Heart left ventricle (tissue), 16 donors: ENCODE measurements at regions of chr7 and their contacts with region 1.

Region 1: DNA sequence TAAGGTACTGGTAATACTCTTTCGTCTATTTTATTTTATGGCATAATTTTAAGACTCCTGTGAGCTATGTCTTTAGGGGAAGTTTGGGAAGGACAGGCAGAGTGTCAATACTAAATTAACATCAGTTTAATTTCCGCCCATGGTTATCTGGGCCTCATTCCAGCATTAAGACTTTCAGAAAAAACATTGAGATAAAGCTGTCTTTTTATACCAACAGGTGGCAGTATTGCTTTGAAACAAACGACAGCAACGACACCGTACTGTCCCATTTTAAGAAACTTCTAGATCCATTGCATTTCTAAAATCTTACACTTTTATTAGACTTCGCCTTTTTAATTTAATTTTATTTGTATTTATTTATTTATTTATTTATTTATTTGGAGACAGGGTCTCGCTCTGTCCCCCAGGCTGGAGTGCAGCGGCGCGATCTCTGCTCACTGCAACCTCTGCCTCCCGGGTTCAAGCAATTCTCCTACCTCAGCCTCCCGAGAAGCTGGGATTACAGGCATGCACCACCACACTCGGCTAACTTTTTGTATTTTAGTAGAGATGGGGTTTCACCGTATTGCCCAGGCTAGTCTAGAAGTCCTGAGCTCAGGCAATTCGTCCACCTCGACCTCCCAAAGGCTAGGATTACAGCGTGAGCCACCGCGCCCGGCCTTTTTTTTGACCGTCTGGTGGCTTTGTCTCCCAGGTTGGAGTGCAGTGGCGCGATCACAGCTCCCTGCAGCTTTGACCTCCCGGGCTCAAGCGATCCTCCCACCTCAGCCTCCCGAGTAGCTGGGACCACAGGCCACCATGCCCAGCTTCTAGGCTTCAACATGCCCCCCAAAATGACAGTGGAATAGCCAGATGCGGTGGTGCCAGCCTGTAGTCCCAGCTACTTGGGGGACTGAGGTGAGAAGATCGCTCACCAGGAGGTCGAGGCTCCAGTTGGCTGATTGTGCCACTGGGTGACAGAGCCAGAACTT is 78.7 kb upstream of the C1GALT1 start:
- DNase-seq: no peak
- ATAC-seq: peak in 3 of 4 donors; percentile 53 to 66 (median 60)
- H3K4me3 ChIP-seq: peak overlapping the region in 2 of 12 donors; percentile 19 to 40
- H3K27ac ChIP-seq: peak overlapping the region in 1 of 12 donors; percentile 10
- H3K4me1 ChIP-seq: peaks cover 0 to 22% (median 14%) of the 10 kb centered on the region in 12 donors
- H3K27me3 ChIP-seq: no peaks in the 10 kb centered on the region
- CTCF ChIP-seq: peak; percentile 59 to 77 (median 70)
- POLR2A ChIP-seq: no peak

Region 2: GRCh38 chr7:7182156-7183060 is 78.8 kb after region 1 on chr7 and contains the start of gene C1GALT1:
- intact Hi-C with region 1: loop called in 5 of 10 experiments (anchors 5 to 10 kb)
- DNase-seq: peak; percentile 98 to 99 (median 98)
- ATAC-seq: peak; percentile 98 to 99 (median 98)
- H3K4me3 ChIP-seq: peak within 1 kb of the TSS; percentile 62 to 97 (median 92)
- H3K27ac ChIP-seq: peak within 1 kb of the TSS; percentile 87 to 99 (median 96)
- H3K4me1 ChIP-seq: peaks cover 0 to 39% (median 25%) of the 10 kb centered on the region in 12 donors
- H3K27me3 ChIP-seq: no peaks in the 10 kb centered on the region
- CTCF ChIP-seq: peak in 11 of 12 donors; percentile 13 to 57 (median 39)
- POLR2A ChIP-seq: peak in 1 of 2 donors; percentile 96
- total RNA-seq, gene C1GALT1: 16.5 to 36.4 (median 21.3) TPM

Region 3: DNA sequence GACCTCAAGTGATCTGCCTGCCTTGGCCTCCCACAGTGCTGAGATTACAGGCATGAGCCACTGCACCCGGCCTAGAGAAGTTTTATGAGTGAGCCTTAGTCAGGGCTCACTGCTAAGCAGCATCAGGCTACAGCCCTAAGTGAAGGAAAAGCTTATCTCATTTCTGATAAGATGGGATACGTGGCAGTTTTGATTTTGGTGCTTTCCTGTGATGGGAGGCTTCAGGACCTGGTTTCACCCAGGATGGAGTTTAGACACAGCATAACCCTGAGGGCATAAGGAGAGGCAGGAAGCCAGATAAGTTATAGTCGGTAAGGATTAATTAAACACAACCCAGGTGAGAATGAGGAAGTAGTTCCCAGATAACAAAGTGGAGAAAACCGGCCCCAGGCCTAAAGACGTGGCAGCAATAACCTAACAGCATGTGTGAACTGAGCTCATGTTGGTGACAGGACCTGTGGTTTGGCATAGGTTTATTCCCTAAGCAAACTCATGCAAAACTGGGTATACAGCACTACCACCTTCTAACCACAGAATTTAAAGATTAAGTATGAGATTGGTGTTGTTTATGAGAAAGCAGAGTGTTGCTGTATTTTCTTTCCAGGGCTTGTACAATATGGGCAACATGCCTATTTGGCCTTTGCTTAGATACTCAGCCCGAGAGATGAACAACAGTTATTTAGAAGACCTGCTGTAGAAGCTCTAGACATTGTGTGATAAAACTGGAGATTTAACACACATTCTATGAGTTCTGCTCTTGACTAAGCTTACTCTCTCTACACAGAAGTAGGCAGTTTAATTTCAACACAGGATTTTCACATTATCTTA is 312.6 kb after region 1 on chr7:
- intact Hi-C with region 1: loop called in 7 of 10 experiments (anchors 5 to 10 kb)
- DNase-seq: no peak
- ATAC-seq: peak in 1 of 4 donors; percentile 28
- H3K4me3 ChIP-seq: no peak overlapping the region
- H3K27ac ChIP-seq: no peak overlapping the region
- H3K4me1 ChIP-seq: peaks cover 0 to 7% (median 0%) of the 10 kb centered on the region in 12 donors
- H3K27me3 ChIP-seq: no peaks in the 10 kb centered on the region
- CTCF ChIP-seq: no peak
- POLR2A ChIP-seq: no peak

Region 4: DNA sequence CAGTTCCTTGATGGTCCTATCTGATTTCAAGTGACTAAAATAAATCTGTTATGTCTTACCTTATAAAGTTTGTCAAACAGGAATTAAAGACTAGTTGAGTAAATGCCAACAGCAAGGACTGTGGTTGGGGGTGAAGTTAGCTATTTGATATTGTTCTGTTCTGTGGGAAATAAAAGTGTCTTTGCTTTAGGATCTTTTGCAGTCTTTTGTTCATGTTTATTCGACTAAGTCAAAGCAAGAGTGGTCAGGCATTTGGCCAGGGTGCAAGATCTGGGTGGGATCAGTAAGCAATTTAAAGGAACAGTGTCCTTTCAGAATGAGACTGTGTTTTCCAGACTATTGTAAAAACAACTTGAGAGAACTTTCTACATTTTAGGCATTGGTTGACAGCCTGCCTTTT is 432.1 kb after region 1 on chr7 and contains the start of gene COL28A1:
- intact Hi-C with region 1: loop called in 9 of 10 experiments (anchors 2 to 5 kb)
- DNase-seq: peak in 1 of 5 donors; percentile 34
- ATAC-seq: no peak
- H3K4me3 ChIP-seq: peak within 1 kb of the TSS in 4 of 12 donors; percentile 6 to 20 (median 8)
- H3K27ac ChIP-seq: no peak within 1 kb of the TSS
- H3K4me1 ChIP-seq: peaks cover 0 to 4% (median 0%) of the 10 kb centered on the region in 12 donors
- H3K27me3 ChIP-seq: no peaks in the 10 kb centered on the region
- CTCF ChIP-seq: no peak
- POLR2A ChIP-seq: no peak
- total RNA-seq, gene COL28A1: 0.29 to 4.4 (median 1.2) TPM

Region 5: DNA sequence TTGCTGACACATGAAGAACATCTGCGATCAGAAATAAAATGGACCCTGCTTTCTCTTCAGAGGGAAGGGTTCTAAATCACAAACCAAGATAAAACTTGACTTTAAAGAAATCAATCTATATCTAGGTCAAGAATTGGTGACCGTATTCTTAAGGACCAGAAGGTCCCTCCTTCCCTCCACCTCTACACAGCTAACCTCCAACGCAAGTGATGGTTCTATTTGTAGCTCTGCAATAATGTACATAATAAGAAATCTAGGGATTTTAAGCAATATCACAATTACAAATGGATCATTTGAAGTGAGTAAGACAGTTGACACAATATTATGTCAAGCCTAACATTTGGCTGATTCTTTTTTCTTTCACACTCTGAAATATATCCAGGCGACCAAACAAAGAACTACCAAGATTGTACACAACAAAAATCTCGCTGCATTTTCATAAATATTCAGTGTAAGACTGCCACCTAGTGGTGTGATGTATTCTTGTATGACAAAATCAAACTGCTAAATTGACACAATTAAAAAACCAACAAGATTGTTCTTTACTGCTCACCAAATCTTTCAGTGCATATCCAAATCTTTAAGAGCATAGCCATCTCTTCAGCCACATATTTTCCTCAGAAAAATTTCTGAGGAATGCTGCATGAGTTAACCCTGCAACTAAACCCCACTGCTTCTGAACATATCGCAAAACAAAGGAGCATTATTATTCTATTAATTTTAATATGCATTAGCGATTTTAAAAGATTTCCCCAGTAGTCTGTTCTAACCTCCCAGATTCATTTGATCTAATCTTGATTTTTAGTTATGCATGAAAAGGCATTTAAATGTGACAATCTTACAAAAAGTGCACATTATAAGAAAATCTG is 1113.8 kb after region 1 on chr7:
- intact Hi-C with region 1: loop called in 1 of 10 experiments (anchors 10 kb)
- DNase-seq: peak in 1 of 5 donors; percentile 33
- ATAC-seq: peak in 2 of 4 donors; percentile 37 to 45
- H3K4me3 ChIP-seq: no peak overlapping the region
- H3K27ac ChIP-seq: no peak overlapping the region
- H3K4me1 ChIP-seq: peaks cover 0 to 24% (median 7%) of the 10 kb centered on the region in 12 donors
- H3K27me3 ChIP-seq: no peaks in the 10 kb centered on the region
- CTCF ChIP-seq: peak; percentile 47 to 90 (median 78)
- POLR2A ChIP-seq: no peak